GM12878 (cell line): ENCODE measurements at regions of chr4 and their contacts with region 1.

Region 1: GRCh38 chr4:156475322-156475721 is 496.3 kb downstream of the PDGFC start:
- DNase-seq: no peak
- ATAC-seq: peak; percentile 61
- H3K4me3 ChIP-seq: no peak overlapping the region
- H3K27ac ChIP-seq: no peak overlapping the region
- H3K4me1 ChIP-seq: no peaks in the 10 kb centered on the region
- H3K27me3 ChIP-seq: no peaks in the 10 kb centered on the region
- CTCF ChIP-seq: peak in 2 of 3 experiments; percentile 13 to 34; a peak in 2 of 6 replicates
- EP300 ChIP-seq: no peak
- POLR2A ChIP-seq: no peak
- RAD21 ChIP-seq: peak; percentile 68

Region 2: GRCh38 chr4:157045507-157046127 is 570.3 kb after region 1 on chr4:
- CTCF ChIA-PET with region 1: interaction called, 18 read pairs
- POLR2A ChIA-PET with region 1: no interaction called
- RAD21 ChIA-PET with region 1: interaction called, 9 read pairs
- SMC1A ChIA-PET with region 1: interaction called, 3 read pairs
- in situ Hi-C with region 1: no loop called
- intact Hi-C with region 1: no loop called
- DNase-seq: no peak
- ATAC-seq: peak; percentile 84
- H3K4me3 ChIP-seq: no peak overlapping the region
- H3K27ac ChIP-seq: no peak overlapping the region
- H3K4me1 ChIP-seq: no peaks in the 10 kb centered on the region
- H3K27me3 ChIP-seq: no peaks in the 10 kb centered on the region
- CTCF ChIP-seq: peak; percentile 54 to 58 (median 58); a peak in 5 of 6 replicates
- EP300 ChIP-seq: no peak
- POLR2A ChIP-seq: no peak
- RAD21 ChIP-seq: peak; percentile 59

Region 3: DNA sequence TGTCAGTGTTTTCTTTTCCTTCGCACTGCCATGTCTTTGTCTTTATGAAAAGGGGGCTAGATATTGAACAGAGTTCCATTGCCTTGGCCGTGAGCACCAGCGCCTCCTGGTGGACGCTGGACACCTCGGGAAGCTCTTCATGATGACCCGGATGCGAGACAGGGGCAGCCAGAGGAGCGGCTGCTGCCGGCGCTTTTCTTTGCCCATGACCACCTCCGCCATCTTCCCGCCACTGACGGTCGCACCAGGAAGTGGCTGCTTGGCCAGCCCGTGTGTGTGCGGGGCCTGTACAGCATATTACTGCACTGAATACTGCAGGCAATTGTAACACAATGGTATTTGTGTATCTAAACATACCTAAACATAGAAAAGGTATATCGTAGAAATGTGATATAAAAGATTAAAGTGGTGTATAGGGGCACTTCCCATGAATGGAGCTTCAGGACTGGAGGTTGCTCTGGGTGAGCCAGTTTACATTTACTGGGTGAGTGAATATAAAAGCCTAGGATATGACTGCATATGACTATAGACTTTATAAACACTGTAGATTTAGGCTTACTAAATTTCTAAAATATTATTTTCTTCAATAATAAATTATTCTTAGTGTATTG is 729.4 kb after region 1 on chr4:
- CTCF ChIA-PET with region 1: interaction called, 3 read pairs
- POLR2A ChIA-PET with region 1: no interaction called
- RAD21 ChIA-PET with region 1: interaction called, 9 read pairs
- SMC1A ChIA-PET with region 1: no interaction called
- in situ Hi-C with region 1: no loop called
- intact Hi-C with region 1: loop called (anchors 10 kb)
- DNase-seq: no peak
- ATAC-seq: peak; percentile 84
- H3K4me3 ChIP-seq: no peak overlapping the region
- H3K27ac ChIP-seq: no peak overlapping the region
- H3K4me1 ChIP-seq: no peaks in the 10 kb centered on the region
- H3K27me3 ChIP-seq: no peaks in the 10 kb centered on the region
- CTCF ChIP-seq: peak; percentile 53 to 72 (median 68)
- EP300 ChIP-seq: no peak
- POLR2A ChIP-seq: no peak
- RAD21 ChIP-seq: peak; percentile 55